ENCODE measurements at regions of chr17 and their contacts with region 1.

Region 1: GRCh38 chr17:61307905-61308886 is 91.4 kb upstream of the TBX2 start:
- DNase-seq: peak; percentile 98
- H3K4me3 ChIP-seq: no peak overlapping the region
- H3K27me3 ChIP-seq: no peaks in the 10 kb centered on the region
- CTCF ChIP-seq: peak; percentile 51

Region 2: DNA sequence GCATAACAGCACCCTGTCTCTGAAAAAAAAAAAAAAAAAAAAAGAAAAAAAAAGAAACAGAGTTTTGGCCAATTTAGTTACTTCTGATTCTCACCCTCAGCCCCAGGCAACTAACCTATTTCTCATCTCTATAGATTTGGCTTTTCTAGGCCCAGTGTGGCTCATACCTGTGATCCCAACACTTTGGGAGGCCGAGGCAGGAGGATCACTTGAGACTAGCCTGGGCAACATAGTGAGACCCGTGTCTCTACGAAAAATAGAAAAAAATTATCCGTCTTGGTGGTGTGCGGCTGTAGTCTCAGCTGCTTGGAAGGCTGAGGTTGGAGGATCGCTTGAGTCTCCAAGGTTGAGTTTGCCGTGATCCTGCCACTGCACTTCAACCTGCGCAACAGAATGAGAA is 1406.6 kb before region 1 on chr17:
- CTCF ChIA-PET with region 1: no interaction called
- POLR2A ChIA-PET with region 1: no interaction called
- DNase-seq: no peak
- H3K4me3 ChIP-seq: no peak overlapping the region
- H3K27me3 ChIP-seq: no peaks in the 10 kb centered on the region
- CTCF ChIP-seq: no peak

Region 3: DNA sequence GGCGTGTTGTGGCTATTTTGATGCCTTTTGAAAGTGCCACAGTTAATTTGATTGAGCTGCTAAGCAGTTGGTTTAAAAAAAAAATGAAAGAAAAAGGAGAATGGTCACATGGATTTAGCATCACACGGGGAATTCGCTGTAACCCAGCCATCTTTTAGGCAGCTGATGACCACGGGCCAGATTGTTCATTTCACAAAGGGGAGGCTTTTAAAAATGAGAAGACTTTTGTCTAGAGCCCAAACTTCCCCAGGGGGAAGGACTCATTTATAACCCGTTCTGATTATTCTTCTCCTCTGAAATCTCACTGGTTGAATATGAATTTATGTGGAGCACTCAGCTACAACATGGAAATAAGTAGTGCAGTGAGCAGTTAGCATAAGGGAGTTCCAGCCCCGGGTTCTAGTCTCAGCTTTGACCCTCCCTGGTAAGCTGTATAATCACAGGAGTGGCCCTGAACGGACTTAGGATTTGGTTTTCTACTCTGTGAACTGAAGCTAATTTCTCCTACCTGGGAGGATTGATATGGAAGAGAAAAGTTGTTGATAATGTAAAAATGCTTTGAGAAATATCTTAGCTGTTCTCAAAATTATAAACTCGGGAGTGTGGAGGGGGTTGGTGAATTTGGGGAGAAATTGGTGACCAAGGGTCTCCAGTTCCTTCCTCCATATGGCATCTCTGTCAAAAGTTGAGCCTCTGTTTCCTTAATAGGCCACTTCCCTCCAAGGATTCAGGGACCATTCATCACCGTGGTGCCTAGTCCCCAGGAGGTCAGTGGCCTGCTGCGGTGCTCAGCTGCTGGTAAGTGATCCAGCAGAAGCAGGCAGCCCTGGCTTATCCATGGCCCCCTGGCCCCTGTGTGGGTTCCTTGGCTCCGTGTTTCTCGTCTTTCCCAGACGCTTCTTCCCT is 15.1 kb after region 1 on chr17:
- CTCF ChIA-PET with region 1: interaction called, 5 read pairs
- POLR2A ChIA-PET with region 1: interaction called, 12 read pairs
- DNase-seq: no peak
- H3K4me3 ChIP-seq: no peak overlapping the region
- H3K27me3 ChIP-seq: no peaks in the 10 kb centered on the region
- CTCF ChIP-seq: no peak

Measured in BJ (cell line).